GM10248 (cell line): ENCODE measurements at regions of chr12 and their contacts with region 1.

Region 1: GRCh38 chr12:48175613-48176416 is 7.6 kb upstream of the CCDC184 start:
- DNase-seq: no peak
- CTCF ChIP-seq: no peak

Region 2: GRCh38 chr12:47977046-47977766 is 198.6 kb before region 1 on chr12:
- CTCF ChIA-PET with region 1: no interaction called
- POLR2A ChIA-PET with region 1: no interaction called
- DNase-seq: no peak
- CTCF ChIP-seq: no peak

Region 3: DNA sequence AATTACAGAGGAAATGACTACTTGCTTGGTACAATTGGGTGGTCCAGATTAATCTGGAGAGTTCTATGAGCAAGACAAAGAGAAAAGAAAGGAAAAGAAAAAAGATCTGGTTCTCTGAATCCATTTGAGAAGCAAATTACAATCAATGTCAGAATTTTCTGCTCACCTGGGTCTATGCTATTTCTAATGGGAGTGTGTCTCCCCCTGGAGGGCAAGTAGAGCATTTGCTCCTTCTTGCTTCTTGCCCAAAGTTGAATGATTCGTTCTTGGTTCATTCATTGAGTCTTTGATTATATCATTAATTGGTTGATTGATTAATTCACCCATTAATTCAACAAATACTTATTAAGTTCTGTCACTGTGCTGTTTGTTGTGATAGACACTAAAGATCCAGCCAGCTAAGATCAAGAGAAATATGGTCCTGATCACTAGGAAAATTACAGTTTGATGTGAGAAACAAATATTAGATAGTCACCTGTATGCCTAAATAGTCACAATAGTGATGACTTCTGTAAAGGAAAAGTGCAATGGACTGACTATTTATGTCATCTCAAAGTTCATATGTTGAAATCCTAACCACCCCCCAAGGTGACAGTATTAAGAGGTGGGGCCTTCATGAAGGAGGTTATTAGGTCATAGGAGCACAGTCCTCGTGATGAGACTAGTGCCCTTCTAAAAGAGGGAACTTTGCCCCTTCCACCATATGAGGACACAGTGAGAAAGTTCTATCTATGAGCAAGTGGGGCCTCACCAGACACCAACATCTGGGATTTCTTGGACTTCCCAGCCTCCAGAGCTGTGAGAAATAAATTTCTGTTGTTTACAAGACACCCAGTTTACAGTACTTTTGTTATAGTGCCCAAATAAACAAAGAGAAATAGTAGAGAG is 10.5 kb before region 1 on chr12:
- CTCF ChIA-PET with region 1: interaction called, 17 read pairs
- POLR2A ChIA-PET with region 1: no interaction called
- DNase-seq: peak; percentile 59
- CTCF ChIP-seq: peak; percentile 87

Region 4: GRCh38 chr12:48189331-48190125 is 13.7 kb after region 1 on chr12:
- CTCF ChIA-PET with region 1: interaction called, 26 read pairs
- POLR2A ChIA-PET with region 1: no interaction called
- DNase-seq: peak; percentile 62
- CTCF ChIP-seq: peak; percentile 88